ENCODE measurements at regions of chr3 and their contacts with region 1.

Region 1: DNA sequence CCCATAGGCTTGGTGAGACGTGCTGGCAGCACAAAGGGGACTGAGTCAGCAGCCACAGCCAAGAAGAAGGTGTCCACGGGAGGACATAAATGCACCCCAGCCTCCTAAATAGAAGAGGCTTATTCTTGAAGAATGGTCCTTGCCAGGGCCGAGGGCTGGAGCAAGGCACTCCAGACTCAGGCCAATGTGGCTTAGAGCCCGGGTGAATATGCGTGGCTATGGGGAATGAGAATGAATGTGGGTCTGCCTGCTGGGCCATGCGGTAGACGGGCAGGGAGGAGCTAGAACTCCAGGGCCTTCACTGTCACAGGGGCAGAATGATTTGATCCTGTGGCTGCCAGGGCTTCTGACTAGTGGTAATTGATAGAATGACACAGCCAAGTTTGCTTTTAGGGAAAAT is 34.0 kb downstream of the DHX30 start:
- DNase-seq: no peak
- ATAC-seq: no peak
- H3K4me3 Mint-ChIP-seq: no peak overlapping the region
- H3K27ac Mint-ChIP-seq: no peak overlapping the region
- H3K4me1 Mint-ChIP-seq: peaks cover 3% of the 10 kb centered on the region
- H3K27me3 Mint-ChIP-seq: no peaks in the 10 kb centered on the region
- CTCF ChIP-seq: no peak

Region 2: DNA sequence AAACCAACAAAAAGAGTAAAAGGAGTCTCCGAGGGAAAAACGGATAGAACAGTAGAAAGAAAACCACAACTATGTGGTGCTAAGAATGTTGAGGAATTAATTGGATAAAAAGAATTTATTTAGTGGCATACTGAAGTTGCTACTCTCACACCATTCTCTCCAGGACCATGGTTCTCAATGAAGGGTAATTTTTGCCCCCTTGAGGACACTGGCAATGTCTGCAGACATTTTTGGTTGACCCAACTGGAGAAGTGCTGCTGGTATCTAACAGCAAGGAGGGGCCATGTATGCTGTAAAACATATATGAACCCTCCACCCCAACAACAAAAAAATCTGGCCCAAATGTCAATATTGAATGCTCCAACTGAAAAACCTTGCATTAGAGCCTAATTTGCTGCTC is 172.5 kb before region 1 on chr3:
- CTCF ChIA-PET with region 1: no interaction called
- POLR2A ChIA-PET with region 1: no interaction called
- intact Hi-C with region 1: no loop called
- DNase-seq: no peak
- ATAC-seq: no peak
- H3K4me3 Mint-ChIP-seq: no peak overlapping the region
- H3K27ac Mint-ChIP-seq: no peak overlapping the region
- H3K4me1 Mint-ChIP-seq: peaks cover 2% of the 10 kb centered on the region
- H3K27me3 Mint-ChIP-seq: no peaks in the 10 kb centered on the region
- CTCF ChIP-seq: no peak

Region 3: GRCh38 chr3:47813551-47814177 is 23.3 kb before region 1 on chr3:
- CTCF ChIA-PET with region 1: interaction called, 20 read pairs
- POLR2A ChIA-PET with region 1: interaction called, 4 read pairs
- intact Hi-C with region 1: no loop called
- DNase-seq: no peak
- ATAC-seq: no peak
- H3K4me3 Mint-ChIP-seq: no peak overlapping the region
- H3K27ac Mint-ChIP-seq: no peak overlapping the region
- H3K4me1 Mint-ChIP-seq: peaks cover 4% of the 10 kb centered on the region
- H3K27me3 Mint-ChIP-seq: no peaks in the 10 kb centered on the region
- CTCF ChIP-seq: no peak

Region 4: GRCh38 chr3:47824541-47825473 is 12.2 kb before region 1 on chr3:
- CTCF ChIA-PET with region 1: interaction called, 39 read pairs
- POLR2A ChIA-PET with region 1: interaction called, 15 read pairs
- intact Hi-C with region 1: no loop called
- DNase-seq: peak; percentile 80
- ATAC-seq: peak; percentile 98
- H3K4me3 Mint-ChIP-seq: peak overlapping the region; percentile 92
- H3K27ac Mint-ChIP-seq: peak overlapping the region; percentile 95
- H3K4me1 Mint-ChIP-seq: peaks cover 28% of the 10 kb centered on the region
- H3K27me3 Mint-ChIP-seq: no peaks in the 10 kb centered on the region
- CTCF ChIP-seq: peak; percentile 82

Region 5: GRCh38 chr3:47961815-47962618 is 125.0 kb after region 1 on chr3:
- CTCF ChIA-PET with region 1: interaction called, 10 read pairs
- POLR2A ChIA-PET with region 1: no interaction called
- intact Hi-C with region 1: no loop called
- DNase-seq: peak; percentile 41
- ATAC-seq: peak; percentile 80
- H3K4me3 Mint-ChIP-seq: no peak overlapping the region
- H3K27ac Mint-ChIP-seq: peak overlapping the region; percentile 39
- H3K4me1 Mint-ChIP-seq: peaks cover 25% of the 10 kb centered on the region
- H3K27me3 Mint-ChIP-seq: no peaks in the 10 kb centered on the region
- CTCF ChIP-seq: no peak

Region 6: DNA sequence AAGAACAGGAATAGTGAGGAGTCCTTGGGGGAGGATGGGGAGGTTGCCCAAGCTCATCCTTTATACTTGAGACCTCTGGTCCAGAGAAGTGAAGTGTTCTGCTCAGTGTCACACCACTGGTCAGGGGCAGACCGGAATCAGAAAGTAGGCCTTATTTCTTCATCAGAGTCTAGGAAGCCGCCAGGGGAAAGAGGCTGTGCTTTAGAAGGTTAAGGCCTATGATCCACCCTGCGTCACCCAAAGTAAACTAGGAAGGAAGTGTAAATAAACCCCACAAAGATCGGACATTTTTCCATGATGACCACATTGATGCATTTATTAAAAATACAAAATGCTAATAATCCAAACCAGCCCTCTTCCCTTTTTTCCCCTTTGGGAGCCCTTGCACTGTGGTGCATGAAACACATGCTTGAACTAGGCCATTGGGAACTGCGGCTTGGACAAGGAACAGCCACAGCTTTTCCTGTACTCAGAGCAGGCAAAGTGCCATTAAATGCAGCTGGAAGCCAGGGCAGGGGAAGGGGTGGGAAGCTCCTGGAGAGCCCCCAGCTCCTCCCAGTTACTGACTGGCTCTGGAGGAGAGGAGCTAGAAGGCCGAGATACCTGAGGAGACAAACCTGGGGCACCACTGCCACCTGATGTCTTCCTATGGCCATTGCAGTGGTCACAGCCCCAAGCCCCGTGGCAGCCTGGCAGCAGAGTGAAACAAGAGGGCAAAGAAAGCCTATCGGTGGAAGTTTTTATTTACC is 314.2 kb after region 1 on chr3:
- CTCF ChIA-PET with region 1: interaction called, 12 read pairs
- POLR2A ChIA-PET with region 1: no interaction called
- intact Hi-C with region 1: no loop called
- DNase-seq: peak; percentile 77
- ATAC-seq: peak; percentile 98
- H3K4me3 Mint-ChIP-seq: no peak overlapping the region
- H3K27ac Mint-ChIP-seq: no peak overlapping the region
- H3K4me1 Mint-ChIP-seq: no peaks in the 10 kb centered on the region
- H3K27me3 Mint-ChIP-seq: no peaks in the 10 kb centered on the region
- CTCF ChIP-seq: peak; percentile 69